Caco-2 (cell line): ENCODE measurements at regions of chr7 and their contacts with region 1.

Region 1: GRCh38 chr7:90900628-90901356 is 304.7 kb downstream of the CDK14 start:
- DNase-seq: peak; percentile 38 to 59
- H3K4me3 ChIP-seq: no peak overlapping the region
- H3K4me3 Mint-ChIP-seq: peak overlapping the region; percentile 15
- H3K27ac Mint-ChIP-seq: peak overlapping the region; percentile 20
- H3K4me1 ChIP-seq: no peaks in the 10 kb centered on the region
- H3K4me1 Mint-ChIP-seq: peaks cover 17% of the 10 kb centered on the region
- H3K27me3 ChIP-seq: no peaks in the 10 kb centered on the region
- H3K27me3 Mint-ChIP-seq: no peaks in the 10 kb centered on the region
- CTCF ChIP-seq: no peak

Region 2: GRCh38 chr7:90690159-90690858 is 210.5 kb before region 1 on chr7:
- CTCF ChIA-PET with region 1: no interaction called
- POLR2A ChIA-PET with region 1: no interaction called
- intact Hi-C with region 1: no loop called
- DNase-seq: no peak
- H3K4me3 ChIP-seq: no peak overlapping the region
- H3K4me3 Mint-ChIP-seq: no peak overlapping the region
- H3K27ac Mint-ChIP-seq: no peak overlapping the region
- H3K4me1 ChIP-seq: peaks cover 34% of the 10 kb centered on the region
- H3K4me1 Mint-ChIP-seq: peaks cover 25% of the 10 kb centered on the region
- H3K27me3 ChIP-seq: no peaks in the 10 kb centered on the region
- H3K27me3 Mint-ChIP-seq: no peaks in the 10 kb centered on the region
- CTCF ChIP-seq: peak in 1 of 2 experiments; percentile 2

Region 3: GRCh38 chr7:90708841-90709317 is 191.9 kb before region 1 on chr7:
- CTCF ChIA-PET with region 1: no interaction called
- POLR2A ChIA-PET with region 1: no interaction called
- intact Hi-C with region 1: loop called (anchors 10 kb)
- DNase-seq: peak in 1 of 2 experiments; percentile 43
- H3K4me3 ChIP-seq: no peak overlapping the region
- H3K4me3 Mint-ChIP-seq: no peak overlapping the region
- H3K27ac Mint-ChIP-seq: no peak overlapping the region
- H3K4me1 ChIP-seq: peaks cover 25% of the 10 kb centered on the region
- H3K4me1 Mint-ChIP-seq: peaks cover 38% of the 10 kb centered on the region
- H3K27me3 ChIP-seq: no peaks in the 10 kb centered on the region
- H3K27me3 Mint-ChIP-seq: no peaks in the 10 kb centered on the region
- CTCF ChIP-seq: peak; percentile 47 to 61

Region 4: GRCh38 chr7:90931986-90932916 is 31.5 kb after region 1 on chr7:
- CTCF ChIA-PET with region 1: interaction called, 3 read pairs
- POLR2A ChIA-PET with region 1: no interaction called
- intact Hi-C with region 1: loop called (anchors 1 kb)
- DNase-seq: no peak
- H3K4me3 ChIP-seq: no peak overlapping the region
- H3K4me3 Mint-ChIP-seq: no peak overlapping the region
- H3K27ac Mint-ChIP-seq: no peak overlapping the region
- H3K4me1 ChIP-seq: no peaks in the 10 kb centered on the region
- H3K4me1 Mint-ChIP-seq: no peaks in the 10 kb centered on the region
- H3K27me3 ChIP-seq: no peaks in the 10 kb centered on the region
- H3K27me3 Mint-ChIP-seq: no peaks in the 10 kb centered on the region
- CTCF ChIP-seq: no peak